ENCODE measurements at regions of chr7 and their contacts with region 1.

Region 1: DNA sequence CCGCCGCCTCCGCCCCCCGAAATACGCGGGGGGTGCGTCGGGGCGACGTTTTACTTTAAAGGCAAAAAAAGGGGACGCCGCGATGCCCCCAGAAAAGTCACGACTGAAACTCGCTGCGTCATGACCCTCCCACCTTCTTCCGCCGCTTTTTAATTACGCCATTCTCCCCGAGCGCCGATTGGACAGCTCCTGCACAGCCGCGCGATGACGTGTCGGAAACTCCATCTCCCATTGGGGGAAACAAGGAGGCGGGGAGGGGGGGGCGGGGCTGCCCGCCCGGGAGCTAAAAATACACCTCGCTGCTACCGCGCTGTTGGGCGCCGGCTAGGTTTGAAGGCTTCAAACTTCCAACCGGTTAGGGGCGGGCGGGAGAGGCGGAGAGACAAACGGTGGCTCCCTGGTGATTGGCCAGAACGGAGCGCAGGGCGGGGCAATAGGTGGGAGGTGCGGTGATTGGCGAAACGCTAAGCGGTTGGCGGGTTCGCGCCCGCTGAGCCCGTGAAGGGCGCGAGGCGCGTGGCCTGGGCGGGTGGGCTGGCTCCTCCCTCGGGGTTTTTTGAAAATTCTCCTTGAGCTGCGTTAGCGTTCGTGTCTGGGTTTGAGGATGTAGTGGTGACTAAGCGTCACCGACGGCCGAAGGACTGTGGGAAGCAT is at the start of gene RHEB:
- DNase-seq: peak; percentile 86 to 99 (median 97)
- H3K4me3 ChIP-seq: peak within 1 kb of the TSS; percentile 57 to 94 (median 79)
- H3K27ac ChIP-seq: peak within 1 kb of the TSS; percentile 69 to 99 (median 95)
- H3K27me3 ChIP-seq: no peaks in the 10 kb centered on the region
- CTCF ChIP-seq: peak in 7 of 56 donors; percentile 5 to 31 (median 16)
- total RNA-seq, gene RHEB: 67.8 to 164 (median 115) TPM

Region 2: GRCh38 chr7:151448261-151449252 is 71.3 kb before region 1 on chr7:
- intact Hi-C with region 1: loop called in 1 of 2 experiments (anchors 5 kb)
- DNase-seq: peak in 7 of 10 donors; percentile 38 to 64 (median 49)
- H3K4me3 ChIP-seq: peak overlapping the region; percentile 13 to 75 (median 57)
- H3K27ac ChIP-seq: peak overlapping the region in 14 of 59 donors; percentile 1 to 82 (median 48)
- H3K27me3 ChIP-seq: peaks cover 0 to 5% (median 0%) of the 10 kb centered on the region in 45 donors
- CTCF ChIP-seq: peak; percentile 36 to 86 (median 72)

Region 3: DNA sequence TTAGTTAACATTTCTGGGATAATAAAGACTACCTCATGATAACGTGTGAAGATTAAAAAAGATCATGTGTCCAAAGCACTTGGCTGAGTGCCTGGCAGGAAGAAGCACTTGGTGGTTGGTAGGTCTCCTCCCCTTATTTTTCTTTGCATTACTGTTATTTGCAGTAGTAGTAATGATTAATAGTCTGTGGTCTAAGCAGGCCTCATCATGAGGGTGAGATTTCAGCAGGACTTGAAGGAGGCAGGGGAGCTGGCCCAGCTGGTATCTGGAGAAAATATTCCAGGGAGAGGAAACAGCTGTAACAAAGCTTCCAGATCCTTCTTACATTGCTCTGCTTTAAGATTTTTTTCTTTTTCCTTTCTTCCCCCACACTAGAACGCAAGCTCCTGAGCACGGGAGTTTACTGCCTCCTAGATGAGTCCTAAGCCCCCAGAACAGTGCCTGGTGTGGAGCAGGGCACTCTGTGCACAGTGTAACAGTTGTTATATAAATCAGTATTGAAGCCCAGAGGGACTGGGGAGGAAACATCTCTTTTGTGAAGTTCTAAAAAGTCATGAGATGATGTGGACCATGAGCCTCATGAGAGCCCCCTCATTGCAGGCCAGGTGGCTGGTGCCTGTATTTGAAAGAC is 30.9 kb after region 1 on chr7:
- intact Hi-C with region 1: no loop called
- DNase-seq: no peak
- H3K4me3 ChIP-seq: no peak overlapping the region
- H3K27ac ChIP-seq: no peak overlapping the region
- H3K27me3 ChIP-seq: no peaks in the 10 kb centered on the region
- CTCF ChIP-seq: no peak

Region 4: DNA sequence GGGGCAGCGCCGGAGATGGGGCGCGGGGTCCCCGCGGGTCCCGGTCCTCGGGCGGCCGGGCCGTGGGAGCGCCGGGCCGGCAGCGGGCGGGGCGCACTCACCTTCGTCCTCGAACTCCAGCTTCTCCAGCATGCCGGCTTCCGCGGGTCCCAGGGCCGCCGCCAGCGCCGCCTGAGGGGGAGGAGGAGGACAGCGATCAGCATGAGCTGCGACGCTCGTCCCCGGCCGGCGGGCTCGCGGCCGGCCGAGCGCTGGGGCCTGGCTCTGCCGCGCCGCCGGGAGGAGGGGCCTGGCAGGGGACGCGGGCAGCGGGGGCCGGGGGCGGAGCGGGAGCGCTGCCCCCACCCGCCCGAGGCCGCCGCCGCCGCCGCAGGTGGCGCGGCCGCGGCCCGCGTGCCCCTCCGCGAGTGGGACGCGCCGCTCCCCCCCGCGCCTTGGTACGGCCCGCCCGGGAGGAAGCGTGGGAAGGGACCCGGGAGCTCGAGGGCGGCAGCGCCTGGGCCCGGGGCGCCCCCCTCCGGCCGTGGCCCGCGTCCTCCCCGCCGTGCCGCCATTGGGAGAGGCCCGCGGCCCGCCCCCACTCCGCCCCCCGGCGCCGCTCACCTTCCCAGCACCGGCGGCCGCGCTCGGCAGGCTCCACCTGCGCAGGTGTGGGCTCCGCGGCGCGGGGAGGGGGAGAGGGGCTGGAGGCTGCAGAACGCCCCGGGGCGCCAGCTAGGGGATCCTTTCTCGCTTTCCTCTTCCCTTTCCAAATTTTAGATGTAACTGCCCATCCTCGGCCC is 112.3 kb after region 1 on chr7:
- intact Hi-C with region 1: loop called (anchors 2 to 5 kb)
- DNase-seq: peak; percentile 47 to 85 (median 70)
- H3K4me3 ChIP-seq: peak overlapping the region; percentile 49 to 86 (median 74)
- H3K27ac ChIP-seq: peak overlapping the region; percentile 62 to 95 (median 89)
- H3K27me3 ChIP-seq: no peaks in the 10 kb centered on the region
- CTCF ChIP-seq: peak in 34 of 56 donors; percentile 9 to 64 (median 41)